ENCODE measurements at regions of chr14 and their contacts with region 1.

Region 1: GRCh38 chr14:100069161-100069791 is 4.1 kb downstream of the EVL start:
- DNase-seq: no peak
- H3K4me3 ChIP-seq: no peak overlapping the region
- H3K27me3 ChIP-seq: no peaks in the 10 kb centered on the region
- CTCF ChIP-seq: no peak

Region 2: GRCh38 chr14:100025111-100025510 is 44.2 kb before region 1 on chr14:
- CTCF ChIA-PET with region 1: interaction called, 3 read pairs
- POLR2A ChIA-PET with region 1: interaction called, 14 read pairs
- DNase-seq: no peak
- H3K4me3 ChIP-seq: no peak overlapping the region
- H3K27me3 ChIP-seq: no peaks in the 10 kb centered on the region
- CTCF ChIP-seq: peak; percentile 50